ENCODE measurements at regions of chr1 and their contacts with region 1.

Region 1: GRCh38 chr1:185044981-185045813 is at the start of gene RNF2:
- DNase-seq: peak; percentile 93
- ATAC-seq: peak; percentile 92
- H3K4me3 ChIP-seq: peak within 1 kb of the TSS; percentile 77 to 96 (median 89)
- H3K4me3 Mint-ChIP-seq: peak within 1 kb of the TSS; percentile 87
- H3K27ac ChIP-seq: peak within 1 kb of the TSS; percentile 72 to 82
- H3K27ac Mint-ChIP-seq: peak within 1 kb of the TSS; percentile 93
- H3K4me1 ChIP-seq: peaks cover 16 to 18% of the 10 kb centered on the region in 2 donors
- H3K4me1 Mint-ChIP-seq: peaks cover 35% of the 10 kb centered on the region
- H3K27me3 ChIP-seq: no peaks in the 10 kb centered on the region
- H3K27me3 Mint-ChIP-seq: no peaks in the 10 kb centered on the region
- CTCF ChIP-seq: no peak
- total RNA-seq, gene RNF2: 24.2 and 29.5 TPM in 2 replicates

Region 2: DNA sequence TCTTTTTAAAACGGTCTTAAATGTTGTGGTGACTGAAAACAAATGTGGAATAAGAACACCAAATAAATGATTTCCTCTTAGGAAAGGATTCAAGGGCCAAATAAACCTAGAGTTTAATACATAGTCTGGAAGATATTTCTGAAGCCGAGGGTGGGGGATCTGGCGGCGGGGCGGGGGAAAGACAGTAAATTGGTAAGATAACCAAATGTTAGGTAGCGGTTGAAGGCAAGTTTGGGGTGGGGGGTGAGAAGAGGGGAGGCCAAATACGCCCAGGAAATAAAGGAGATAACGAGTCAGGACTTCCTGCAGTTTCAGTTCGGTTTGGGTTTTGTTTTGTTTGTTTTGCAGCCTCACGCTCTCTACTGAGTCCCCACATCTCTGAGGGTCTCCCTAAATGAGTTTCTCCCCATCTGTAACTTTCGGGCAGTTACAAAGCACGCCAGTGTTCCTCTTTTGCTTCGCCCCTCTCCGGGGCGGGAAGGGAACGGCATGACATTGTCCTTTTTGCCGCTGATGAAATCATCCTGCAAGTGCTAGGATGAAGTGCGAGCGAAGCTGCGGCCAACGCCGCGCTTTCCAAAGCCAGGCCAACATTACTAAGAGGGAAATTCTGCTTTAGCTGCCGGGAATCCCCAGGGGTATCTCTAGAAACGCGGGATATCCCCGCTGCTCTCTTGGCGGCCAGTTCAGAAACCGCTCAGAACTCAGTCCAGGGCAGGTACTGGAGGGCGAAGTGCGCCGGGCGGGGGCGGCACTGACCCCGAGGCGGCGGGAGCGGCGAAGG is 71.7 kb before region 1 on chr1:
- CTCF ChIA-PET with region 1: interaction called, 4 read pairs
- POLR2A ChIA-PET with region 1: no interaction called
- intact Hi-C with region 1: loop called (anchors 5 kb)
- DNase-seq: peak; percentile 69
- ATAC-seq: peak; percentile 39
- H3K4me3 ChIP-seq: peak overlapping the region; percentile 57 to 85 (median 61)
- H3K4me3 Mint-ChIP-seq: peak overlapping the region; percentile 96
- H3K27ac ChIP-seq: peak overlapping the region; percentile 21 to 54
- H3K27ac Mint-ChIP-seq: peak overlapping the region; percentile 85
- H3K4me1 ChIP-seq: peaks cover 5 to 17% of the 10 kb centered on the region in 2 donors
- H3K4me1 Mint-ChIP-seq: peaks cover 40% of the 10 kb centered on the region
- H3K27me3 ChIP-seq: peaks cover 0 to 11% (median 9%) of the 10 kb centered on the region in 4 experiments
- H3K27me3 Mint-ChIP-seq: peaks cover 10% of the 10 kb centered on the region
- CTCF ChIP-seq: no peak

Region 3: DNA sequence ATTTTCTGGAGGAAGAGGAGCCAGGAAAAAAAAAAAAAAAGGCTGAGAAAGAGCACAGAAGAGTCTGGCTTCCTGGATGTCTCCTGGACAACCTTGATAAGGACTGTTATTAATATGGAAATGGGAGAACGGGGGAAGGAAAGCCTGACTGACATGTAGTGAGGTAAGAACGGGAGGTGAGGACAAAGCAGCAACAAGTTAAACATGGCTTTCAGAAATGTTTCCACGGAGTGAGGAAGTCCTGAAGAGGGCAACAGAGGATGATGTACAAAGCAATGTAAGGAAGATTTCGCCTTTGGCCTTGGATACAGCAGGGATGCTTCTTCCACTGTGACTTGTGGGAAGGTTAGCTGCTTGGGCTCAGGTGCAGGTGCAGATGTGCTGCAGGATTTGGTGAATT is 59.0 kb before region 1 on chr1:
- CTCF ChIA-PET with region 1: no interaction called
- POLR2A ChIA-PET with region 1: no interaction called
- intact Hi-C with region 1: no loop called
- DNase-seq: no peak
- ATAC-seq: no peak
- H3K4me3 ChIP-seq: no peak overlapping the region
- H3K4me3 Mint-ChIP-seq: no peak overlapping the region
- H3K27ac ChIP-seq: no peak overlapping the region
- H3K27ac Mint-ChIP-seq: no peak overlapping the region
- H3K4me1 ChIP-seq: peaks cover 0 to 3% of the 10 kb centered on the region in 2 donors
- H3K4me1 Mint-ChIP-seq: peaks cover 2% of the 10 kb centered on the region
- H3K27me3 ChIP-seq: no peaks in the 10 kb centered on the region
- H3K27me3 Mint-ChIP-seq: peaks cover 11% of the 10 kb centered on the region
- CTCF ChIP-seq: no peak

Region 4: DNA sequence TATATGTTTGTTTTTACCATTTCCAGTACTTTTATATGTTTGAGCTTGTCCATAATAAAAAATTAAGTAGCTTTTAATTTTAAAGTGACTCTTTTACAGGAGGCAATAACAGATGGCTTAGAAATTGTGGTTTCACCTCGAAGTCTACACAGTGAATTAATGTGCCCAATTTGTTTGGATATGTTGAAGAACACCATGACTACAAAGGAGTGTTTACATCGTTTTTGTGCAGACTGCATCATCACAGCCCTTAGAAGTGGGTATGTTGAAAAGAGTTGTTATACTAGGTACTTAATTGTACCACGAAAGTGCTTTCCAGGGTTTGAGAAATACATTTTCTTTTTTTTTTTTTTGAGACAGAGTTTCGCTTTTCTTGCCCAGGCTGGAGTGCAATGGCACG is 46.3 kb after region 1 on chr1:
- CTCF ChIA-PET with region 1: no interaction called
- POLR2A ChIA-PET with region 1: no interaction called
- intact Hi-C with region 1: no loop called
- DNase-seq: no peak
- ATAC-seq: no peak
- H3K4me3 ChIP-seq: no peak overlapping the region
- H3K4me3 Mint-ChIP-seq: no peak overlapping the region
- H3K27ac ChIP-seq: no peak overlapping the region
- H3K27ac Mint-ChIP-seq: no peak overlapping the region
- H3K4me1 ChIP-seq: no peaks in the 10 kb centered on the region
- H3K4me1 Mint-ChIP-seq: peaks cover under 1% of the 10 kb centered on the region
- H3K27me3 ChIP-seq: no peaks in the 10 kb centered on the region
- H3K27me3 Mint-ChIP-seq: no peaks in the 10 kb centered on the region
- CTCF ChIP-seq: no peak

Region 5: GRCh38 chr1:185156854-185157598 is 111.8 kb after region 1 on chr1 and contains the starts of genes SWT1 and TRMT1L:
- CTCF ChIA-PET with region 1: interaction called, 3 read pairs
- POLR2A ChIA-PET with region 1: interaction called, 8 read pairs
- intact Hi-C with region 1: loop called (anchors 1 kb)
- DNase-seq: peak; percentile 100
- ATAC-seq: peak; percentile 83
- H3K4me3 ChIP-seq: peak within 1 kb of the TSS; percentile 80 to 99 (median 98)
- H3K4me3 Mint-ChIP-seq: peak within 1 kb of the TSS; percentile 93
- H3K27ac ChIP-seq: peak within 1 kb of the TSS; percentile 98 to 100
- H3K27ac Mint-ChIP-seq: peak within 1 kb of the TSS; percentile 97
- H3K4me1 ChIP-seq: peaks cover 11 to 36% of the 10 kb centered on the region in 2 donors
- H3K4me1 Mint-ChIP-seq: peaks cover 44% of the 10 kb centered on the region
- H3K27me3 ChIP-seq: no peaks in the 10 kb centered on the region
- H3K27me3 Mint-ChIP-seq: no peaks in the 10 kb centered on the region
- CTCF ChIP-seq: no peak
- total RNA-seq, gene SWT1: 8.5 and 9.2 TPM in 2 replicates
- total RNA-seq, gene TRMT1L: 27.5 and 33.2 TPM in 2 replicates

Region 6: GRCh38 chr1:185170291-185170848 is 125.2 kb after region 1 on chr1:
- CTCF ChIA-PET with region 1: interaction called, 14 read pairs
- POLR2A ChIA-PET with region 1: no interaction called
- intact Hi-C with region 1: no loop called
- DNase-seq: peak; percentile 79
- ATAC-seq: peak; percentile 81
- H3K4me3 ChIP-seq: no peak overlapping the region
- H3K4me3 Mint-ChIP-seq: no peak overlapping the region
- H3K27ac ChIP-seq: peak overlapping the region in 1 of 2 donors; percentile 3
- H3K27ac Mint-ChIP-seq: no peak overlapping the region
- H3K4me1 ChIP-seq: peaks cover 0 to 6% of the 10 kb centered on the region in 2 donors
- H3K4me1 Mint-ChIP-seq: peaks cover 4% of the 10 kb centered on the region
- H3K27me3 ChIP-seq: no peaks in the 10 kb centered on the region
- H3K27me3 Mint-ChIP-seq: no peaks in the 10 kb centered on the region
- CTCF ChIP-seq: peak; percentile 84

Region 7: GRCh38 chr1:185603158-185603557 is 558.0 kb after region 1 on chr1:
- CTCF ChIA-PET with region 1: no interaction called
- POLR2A ChIA-PET with region 1: no interaction called
- intact Hi-C with region 1: loop called (anchors 5 kb)
- DNase-seq: peak; percentile 86
- ATAC-seq: peak; percentile 93
- H3K4me3 ChIP-seq: peak overlapping the region in 1 of 5 experiments; percentile 42
- H3K4me3 Mint-ChIP-seq: no peak overlapping the region
- H3K27ac ChIP-seq: peak overlapping the region; percentile 27 to 56
- H3K27ac Mint-ChIP-seq: no peak overlapping the region
- H3K4me1 ChIP-seq: peaks cover 54 to 68% of the 10 kb centered on the region in 2 donors
- H3K4me1 Mint-ChIP-seq: peaks cover 31% of the 10 kb centered on the region
- H3K27me3 ChIP-seq: no peaks in the 10 kb centered on the region
- H3K27me3 Mint-ChIP-seq: no peaks in the 10 kb centered on the region
- CTCF ChIP-seq: no peak

Region 8: GRCh38 chr1:186375088-186375953 is 1330.1 kb after region 1 on chr1 and contains the starts of genes ODR4 and TPR:
- CTCF ChIA-PET with region 1: no interaction called
- POLR2A ChIA-PET with region 1: no interaction called
- intact Hi-C with region 1: loop called (anchors 5 kb)
- DNase-seq: peak; percentile 98
- ATAC-seq: peak; percentile 85
- H3K4me3 ChIP-seq: peak within 1 kb of the TSS; percentile 67 to 97 (median 91)
- H3K4me3 Mint-ChIP-seq: peak within 1 kb of the TSS; percentile 89
- H3K27ac ChIP-seq: peak within 1 kb of the TSS; percentile 76 to 96
- H3K27ac Mint-ChIP-seq: peak within 1 kb of the TSS; percentile 90
- H3K4me1 ChIP-seq: peaks cover 10 to 20% of the 10 kb centered on the region in 2 donors
- H3K4me1 Mint-ChIP-seq: peaks cover 27% of the 10 kb centered on the region
- H3K27me3 ChIP-seq: no peaks in the 10 kb centered on the region
- H3K27me3 Mint-ChIP-seq: no peaks in the 10 kb centered on the region
- CTCF ChIP-seq: peak; percentile 86
- total RNA-seq, gene ODR4: 15.0 and 17.2 TPM in 2 replicates
- total RNA-seq, gene TPR: 141 and 144 TPM in 2 replicates